ENCODE measurements at regions of chr6 and their contacts with region 1.

Region 1: DNA sequence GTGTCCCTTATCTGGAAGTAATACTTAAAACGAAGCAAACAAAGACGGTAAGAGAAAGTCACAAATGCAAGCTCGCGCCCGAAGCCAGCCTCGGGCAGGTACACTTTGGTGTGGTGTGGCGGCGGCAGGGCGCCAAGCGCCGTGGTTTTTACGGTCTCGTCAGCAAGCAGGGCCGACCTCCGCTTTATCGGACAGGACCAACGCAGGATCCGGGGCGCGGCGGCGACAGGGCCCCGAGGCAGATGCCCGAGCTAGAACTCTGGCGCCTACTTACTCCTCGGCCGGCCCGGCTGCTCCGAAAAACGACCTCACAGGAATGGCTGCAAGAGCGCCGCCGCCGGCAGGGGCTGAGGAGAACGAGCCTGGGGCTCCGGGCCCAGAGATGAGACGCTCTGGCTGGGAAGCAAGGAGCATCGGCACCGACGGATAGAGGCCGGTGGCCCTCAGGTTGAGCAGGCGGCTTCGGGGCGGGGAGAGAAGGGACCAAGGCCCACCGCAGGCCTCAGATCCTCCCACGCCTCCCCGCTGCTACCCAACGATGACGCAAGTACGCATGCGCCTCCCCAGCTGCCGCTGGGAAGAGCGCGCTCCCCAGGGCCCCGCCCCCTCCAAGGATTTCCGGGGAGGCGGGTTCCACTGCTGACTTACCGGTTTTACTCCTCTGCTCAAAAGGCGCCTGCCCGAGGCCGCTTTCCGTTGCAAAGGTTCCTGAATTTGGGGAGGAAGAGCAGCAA is 60.6 kb downstream of the FAM217A start:
- DNase-seq: peak; percentile 87 to 94
- H3K4me3 ChIP-seq: peak overlapping the region; percentile 95
- H3K27ac ChIP-seq: peak overlapping the region; percentile 90
- H3K4me1 ChIP-seq: peaks cover 25% of the 10 kb centered on the region
- H3K27me3 ChIP-seq: no peaks in the 10 kb centered on the region
- CTCF ChIP-seq: no peak; the same call in 1 of the 2 replicates

Region 2: GRCh38 chr6:3732345-3733141 is 285.8 kb before region 1 on chr6:
- CTCF ChIA-PET with region 1: interaction called, 20 read pairs
- POLR2A ChIA-PET with region 1: no interaction called
- intact Hi-C with region 1: no loop called
- DNase-seq: peak; percentile 55 to 72
- H3K4me3 ChIP-seq: no peak overlapping the region
- H3K27ac ChIP-seq: no peak overlapping the region
- H3K4me1 ChIP-seq: no peaks in the 10 kb centered on the region
- H3K27me3 ChIP-seq: no peaks in the 10 kb centered on the region
- CTCF ChIP-seq: peak; percentile 86

Region 3: GRCh38 chr6:4049246-4049645 is 30.9 kb after region 1 on chr6:
- CTCF ChIA-PET with region 1: no interaction called
- POLR2A ChIA-PET with region 1: no interaction called
- intact Hi-C with region 1: no loop called
- DNase-seq: no peak
- H3K4me3 ChIP-seq: no peak overlapping the region
- H3K27ac ChIP-seq: no peak overlapping the region
- H3K4me1 ChIP-seq: no peaks in the 10 kb centered on the region
- H3K27me3 ChIP-seq: no peaks in the 10 kb centered on the region
- CTCF ChIP-seq: no peak

Region 4: DNA sequence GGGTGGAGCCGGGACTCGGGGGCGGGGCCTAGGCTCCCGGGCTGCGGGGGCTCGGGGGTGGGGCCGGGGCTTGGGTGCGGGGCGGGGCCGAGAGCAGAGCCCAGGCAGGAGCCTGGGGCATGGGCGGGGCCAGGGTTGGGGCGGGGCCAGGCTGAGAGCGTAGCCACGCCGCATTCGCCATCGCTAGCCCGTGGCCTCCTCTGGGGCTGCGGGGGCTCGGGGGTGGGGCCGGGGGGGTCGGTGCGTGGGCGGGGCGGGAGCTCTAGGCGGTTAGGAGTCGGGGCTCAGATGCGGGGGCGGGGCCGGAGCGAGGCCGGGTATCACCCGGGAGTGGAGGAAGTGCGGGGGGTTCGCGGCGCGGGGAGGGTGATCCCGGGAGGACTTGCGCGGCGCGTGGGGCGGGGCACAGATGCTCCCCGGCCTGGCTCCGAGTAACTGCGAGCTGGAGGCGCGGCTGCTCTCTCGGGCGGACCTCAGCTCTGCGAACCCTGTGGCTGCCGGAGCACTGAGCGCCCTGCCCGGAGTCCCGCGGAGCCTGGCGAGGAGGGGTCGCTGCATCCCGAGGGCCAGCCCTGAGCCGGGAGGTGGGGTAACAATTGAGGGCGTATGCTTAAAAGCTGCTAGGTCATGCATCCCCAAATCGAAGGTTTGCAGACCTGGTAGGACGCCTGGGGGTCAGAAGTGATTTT is 117.5 kb after region 1 on chr6:
- CTCF ChIA-PET with region 1: interaction called, 15 read pairs
- POLR2A ChIA-PET with region 1: interaction called, 9 read pairs
- intact Hi-C with region 1: loop called (anchors 5 kb)
- DNase-seq: peak; percentile 58 to 93
- H3K4me3 ChIP-seq: peak overlapping the region; percentile 63
- H3K27ac ChIP-seq: peak overlapping the region; percentile 65
- H3K4me1 ChIP-seq: peaks cover 21% of the 10 kb centered on the region
- H3K27me3 ChIP-seq: no peaks in the 10 kb centered on the region
- CTCF ChIP-seq: no peak